AG04450 (cell line): ENCODE measurements at regions of chr17 and their contacts with region 1.

Region 1: DNA sequence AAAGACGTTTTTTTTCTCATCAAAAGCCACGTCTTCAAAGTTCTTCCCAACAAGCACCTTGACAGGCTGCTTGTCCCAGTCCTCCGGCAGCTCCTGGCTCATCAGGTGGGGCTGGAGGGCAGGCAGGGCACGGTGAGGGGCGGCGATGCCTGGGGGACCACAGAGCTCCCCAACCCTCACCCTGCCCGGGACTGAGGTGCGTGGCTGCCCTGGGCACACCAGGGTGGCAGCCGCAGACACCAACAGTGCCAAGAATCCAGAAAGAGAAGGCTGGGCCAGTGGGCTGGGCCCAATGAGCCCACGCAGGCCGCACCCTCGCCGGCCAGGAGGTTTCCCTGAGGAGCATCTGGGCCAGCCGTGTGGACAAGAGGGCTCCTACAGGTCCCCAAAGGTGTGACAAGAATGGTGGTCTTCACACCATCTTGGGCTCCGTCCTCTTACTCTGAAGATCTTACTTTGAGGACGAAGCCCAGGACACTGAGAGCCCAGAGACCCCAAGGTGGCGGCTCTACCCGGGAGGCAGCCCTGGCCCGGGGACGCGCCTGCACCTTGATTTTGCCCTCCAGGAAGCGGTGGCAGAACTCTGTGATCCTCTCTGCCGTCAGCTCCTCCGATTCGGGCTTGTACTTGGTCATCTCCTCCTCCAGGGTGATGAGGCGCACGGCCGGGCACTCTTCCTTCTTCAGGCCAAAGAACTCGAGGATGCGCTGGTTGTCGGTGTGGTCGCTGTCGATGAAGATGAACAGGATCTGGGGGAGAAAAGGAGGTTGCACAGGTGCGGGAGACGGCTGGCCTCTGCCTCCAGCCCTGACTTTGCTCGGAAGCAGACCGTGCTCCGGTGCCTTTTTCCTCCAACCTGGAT is 11.3 kb upstream of the PPP1R27 start:
- DNase-seq: no peak
- H3K4me3 ChIP-seq: no peak overlapping the region
- H3K27ac ChIP-seq: no peak overlapping the region
- H3K27me3 ChIP-seq: no peaks in the 10 kb centered on the region
- CTCF ChIP-seq: no peak

Region 2: DNA sequence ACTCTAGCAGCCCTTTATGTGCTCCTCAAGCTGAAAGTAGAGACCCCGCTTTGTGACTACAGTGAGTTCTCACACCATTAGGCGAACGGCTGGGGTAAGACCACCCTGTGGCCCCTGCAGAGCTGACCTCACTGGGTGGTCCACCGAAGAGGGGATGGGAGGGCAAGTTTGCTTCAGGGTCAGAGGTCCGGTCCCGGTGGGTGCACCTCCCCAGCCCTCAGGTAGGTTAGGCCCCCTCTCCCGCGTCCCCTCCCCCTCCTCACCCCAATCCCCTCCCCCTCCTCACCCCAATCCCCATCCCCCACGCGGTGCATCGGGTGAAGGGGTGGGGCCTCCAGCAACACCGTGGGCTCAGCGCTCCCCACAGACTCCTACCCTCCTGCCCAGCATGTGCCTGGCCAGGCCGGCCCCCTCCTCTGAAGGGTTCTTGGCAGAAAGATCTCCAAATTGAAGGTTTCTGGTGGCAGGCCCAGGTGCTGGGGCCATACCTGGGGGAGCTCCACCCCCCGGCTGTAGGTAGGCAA is 26.4 kb before region 1 on chr17:
- CTCF ChIA-PET with region 1: no interaction called
- POLR2A ChIA-PET with region 1: interaction called, 11 read pairs
- DNase-seq: no peak
- H3K4me3 ChIP-seq: no peak overlapping the region
- H3K27ac ChIP-seq: no peak overlapping the region
- H3K27me3 ChIP-seq: peaks cover 2% of the 10 kb centered on the region
- CTCF ChIP-seq: no peak